IMR-90 (cell line): ENCODE measurements at regions of chr10 and their contacts with region 1.

Region 1: GRCh38 chr10:2734603-2735002 is 332.7 kb upstream of the PFKP start:
- DNase-seq: no peak
- ATAC-seq: no peak
- H3K4me3 ChIP-seq: no peak overlapping the region
- H3K27ac ChIP-seq: no peak overlapping the region
- H3K4me1 ChIP-seq: no peaks in the 10 kb centered on the region
- H3K27me3 ChIP-seq: no peaks in the 10 kb centered on the region
- CTCF ChIP-seq: no peak
- POLR2A ChIP-seq: no peak
- RAD21 ChIP-seq: no peak

Region 2: DNA sequence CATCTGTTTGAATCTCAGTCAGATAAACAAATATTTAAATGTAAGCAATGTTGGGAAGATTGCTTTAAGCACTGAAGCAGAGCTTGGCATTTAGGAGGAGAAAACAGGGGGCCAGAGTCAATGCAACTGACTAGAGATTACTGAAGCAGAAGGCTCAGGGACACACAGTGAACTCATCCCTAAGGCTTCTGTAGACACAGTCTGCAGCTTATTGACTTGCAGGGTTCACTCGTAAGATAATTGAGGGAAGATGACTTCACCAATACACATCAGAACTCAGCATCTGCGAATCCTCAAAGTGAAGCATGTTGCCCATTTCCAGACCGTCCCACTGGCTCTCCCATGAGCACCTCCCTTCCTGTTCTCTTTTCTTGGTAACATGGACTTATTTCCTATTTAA is 30.6 kb before region 1 on chr10:
- CTCF ChIA-PET with region 1: no interaction called
- POLR2A ChIA-PET with region 1: no interaction called
- dilution Hi-C with region 1: no loop called
- in situ Hi-C with region 1: no loop called
- intact Hi-C with region 1: loop called (anchors 2 kb)
- DNase-seq: no peak
- ATAC-seq: no peak
- H3K4me3 ChIP-seq: no peak overlapping the region
- H3K27ac ChIP-seq: no peak overlapping the region
- H3K4me1 ChIP-seq: no peaks in the 10 kb centered on the region
- H3K27me3 ChIP-seq: no peaks in the 10 kb centered on the region
- CTCF ChIP-seq: no peak
- POLR2A ChIP-seq: no peak
- RAD21 ChIP-seq: no peak

Region 3: GRCh38 chr10:2897619-2898508 is 163.3 kb after region 1 on chr10:
- CTCF ChIA-PET with region 1: no interaction called
- POLR2A ChIA-PET with region 1: no interaction called
- dilution Hi-C with region 1: no loop called
- in situ Hi-C with region 1: no loop called
- intact Hi-C with region 1: no loop called
- DNase-seq: no peak
- ATAC-seq: no peak
- H3K4me3 ChIP-seq: no peak overlapping the region
- H3K27ac ChIP-seq: no peak overlapping the region
- H3K4me1 ChIP-seq: no peaks in the 10 kb centered on the region
- H3K27me3 ChIP-seq: peaks cover 2% of the 10 kb centered on the region; the same call in 1 of the 2 replicates
- CTCF ChIP-seq: no peak
- POLR2A ChIP-seq: no peak
- RAD21 ChIP-seq: no peak